Ovary (tissue), 10 donors: ENCODE measurements at regions of chr14 and their contacts with region 1.

Region 1: GRCh38 chr14:67934008-67934481 is 114.5 kb downstream of the RAD51B start:
- DNase-seq: peak in 2 of 5 donors; percentile 26 to 53
- H3K4me3 ChIP-seq: no peak overlapping the region
- H3K27ac ChIP-seq: peak overlapping the region in 1 of 2 donors; percentile 38
- H3K4me1 ChIP-seq: peaks cover 3% of the 10 kb centered on the region
- H3K27me3 ChIP-seq: no peaks in the 10 kb centered on the region
- CTCF ChIP-seq: peak; percentile 67 to 96 (median 93)
- EP300 ChIP-seq: no peak
- POLR2A ChIP-seq: no peak

Region 2: GRCh38 chr14:68520637-68521556 is 586.9 kb after region 1 on chr14:
- intact Hi-C with region 1: loop called in 1 of 4 experiments (anchors 10 kb)
- DNase-seq: no peak
- H3K4me3 ChIP-seq: no peak overlapping the region
- H3K27ac ChIP-seq: peak overlapping the region; percentile 74 to 75
- H3K4me1 ChIP-seq: peaks cover 49% of the 10 kb centered on the region
- H3K27me3 ChIP-seq: no peaks in the 10 kb centered on the region
- CTCF ChIP-seq: no peak
- EP300 ChIP-seq: no peak
- POLR2A ChIP-seq: no peak

Region 3: GRCh38 chr14:68816262-68816942 is 882.4 kb after region 1 on chr14:
- intact Hi-C with region 1: loop called (anchors 5 kb)
- DNase-seq: peak; percentile 92 to 96 (median 95)
- H3K4me3 ChIP-seq: peak overlapping the region; percentile 45
- H3K27ac ChIP-seq: peak overlapping the region; percentile 75 to 99
- H3K4me1 ChIP-seq: peaks cover 28% of the 10 kb centered on the region
- H3K27me3 ChIP-seq: no peaks in the 10 kb centered on the region
- CTCF ChIP-seq: peak; percentile 96 to 100 (median 98)
- EP300 ChIP-seq: no peak
- POLR2A ChIP-seq: peak; percentile 63